Endothelial cell of umbilical vein (primary cell): ENCODE measurements at regions of chrX and their contacts with region 1.

Region 1: DNA sequence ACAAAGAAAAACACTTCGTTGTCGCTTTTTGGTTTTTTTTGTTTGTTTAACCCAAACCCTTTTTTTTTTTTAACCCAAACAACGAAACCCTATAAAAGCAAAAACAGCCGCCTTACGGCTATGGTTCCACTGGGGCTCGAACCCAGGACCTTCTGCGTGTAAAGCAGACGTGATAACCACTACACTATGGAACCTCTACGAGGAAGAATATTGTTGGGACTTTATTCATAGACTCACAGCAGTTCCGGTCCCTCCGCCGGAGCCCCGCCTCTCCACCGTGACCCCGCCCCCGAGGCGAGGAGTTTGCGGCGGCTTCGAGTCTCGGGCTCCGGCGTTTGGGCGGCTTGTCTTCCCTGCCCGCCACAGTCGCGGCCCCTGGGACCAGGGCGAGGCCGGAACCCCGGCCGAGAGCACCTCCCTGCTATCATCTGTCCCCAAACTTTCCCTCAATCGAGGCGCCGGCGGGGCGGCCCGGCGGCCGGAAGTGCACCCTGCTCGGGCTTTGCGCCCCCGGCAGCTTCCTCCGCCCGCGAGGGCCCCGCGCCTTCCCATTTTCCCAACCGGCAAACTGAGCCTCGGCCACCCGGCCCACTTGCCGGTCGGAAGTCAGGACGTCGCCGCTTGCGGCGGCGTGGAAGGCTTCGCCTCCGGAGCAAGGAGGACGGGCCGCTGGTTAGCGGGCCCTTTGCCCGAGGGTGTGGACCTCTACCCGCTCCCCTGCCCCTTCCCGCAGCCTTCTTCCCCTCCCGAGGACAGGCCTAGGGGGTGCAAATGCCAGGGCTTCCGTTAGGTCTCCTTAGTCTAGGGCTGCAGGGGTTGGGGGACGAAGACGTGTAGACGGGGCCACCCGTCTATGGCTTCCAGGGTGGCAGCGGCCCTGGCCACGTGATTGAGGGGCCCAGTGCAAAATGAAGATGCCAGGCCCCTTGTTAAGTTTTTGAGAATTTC is 3.2 kb upstream of the RS1 start:
- DNase-seq: peak; percentile 80
- H3K4me3 ChIP-seq: peak overlapping the region; percentile 63 to 76 (median 70)
- H3K27ac ChIP-seq: peak overlapping the region; percentile 60
- H3K4me1 ChIP-seq: no peaks in the 10 kb centered on the region
- H3K27me3 ChIP-seq: no peaks in the 10 kb centered on the region
- CTCF ChIP-seq: no peak
- POLR2A ChIP-seq: no peak

Region 2: GRCh38 chrX:18596096-18596495 is 79.0 kb before region 1 on chrX:
- CTCF ChIA-PET with region 1: no interaction called
- POLR2A ChIA-PET with region 1: no interaction called
- dilution Hi-C with region 1: no loop called
- intact Hi-C with region 1: no loop called
- DNase-seq: no peak
- H3K4me3 ChIP-seq: no peak overlapping the region
- H3K27ac ChIP-seq: no peak overlapping the region
- H3K4me1 ChIP-seq: no peaks in the 10 kb centered on the region
- H3K27me3 ChIP-seq: no peaks in the 10 kb centered on the region
- CTCF ChIP-seq: no peak
- POLR2A ChIP-seq: no peak

Region 3: GRCh38 chrX:18687856-18688495 is 12.9 kb after region 1 on chrX:
- CTCF ChIA-PET with region 1: interaction called, 13 read pairs
- POLR2A ChIA-PET with region 1: no interaction called
- dilution Hi-C with region 1: no loop called
- intact Hi-C with region 1: no loop called
- DNase-seq: no peak
- H3K4me3 ChIP-seq: no peak overlapping the region
- H3K27ac ChIP-seq: no peak overlapping the region
- H3K4me1 ChIP-seq: no peaks in the 10 kb centered on the region
- H3K27me3 ChIP-seq: peaks cover 1 to 2% of the 10 kb centered on the region in 2 experiments
- CTCF ChIP-seq: no peak
- POLR2A ChIP-seq: no peak